CD4-positive, alpha-beta T cell (primary cell): ENCODE measurements at regions of chr9 and their contacts with region 1.

Region 1: DNA sequence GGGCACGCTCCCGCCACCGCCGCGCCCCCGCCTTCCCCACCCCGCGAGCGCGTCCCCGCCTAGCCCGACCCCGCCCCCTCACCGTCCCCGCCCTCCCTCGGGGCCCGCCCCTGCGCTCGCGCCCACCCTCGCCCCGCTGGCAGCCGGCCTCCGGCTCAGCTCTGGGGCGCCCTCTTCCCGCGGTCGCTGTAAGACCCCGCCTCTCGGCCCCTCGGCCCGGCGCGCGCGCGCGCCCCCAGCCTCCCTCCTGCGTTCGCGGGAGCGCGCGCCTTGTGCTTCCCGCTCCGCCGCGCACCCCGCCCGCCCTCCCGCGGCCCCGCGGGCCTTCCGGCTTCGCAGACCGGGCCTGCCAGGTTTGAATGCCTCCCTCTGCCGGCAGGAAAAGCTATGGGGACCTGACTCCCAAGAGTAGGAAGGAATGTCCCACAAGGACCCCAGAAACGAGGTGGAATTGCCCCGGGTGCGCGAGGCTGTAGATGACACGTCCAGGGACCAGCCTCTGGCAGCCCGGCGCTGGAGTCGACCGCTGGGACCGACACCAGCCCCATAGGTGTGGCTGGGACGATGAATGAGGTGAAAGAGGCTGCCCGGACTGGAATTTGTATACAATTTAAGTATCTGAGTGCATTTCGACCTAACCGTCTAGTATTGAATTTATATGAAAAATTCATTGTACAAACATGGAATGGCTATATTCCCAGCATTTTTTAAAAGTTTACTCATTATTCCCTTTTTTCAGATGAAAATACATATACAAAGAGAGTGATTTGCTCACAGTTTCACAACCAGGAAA is 416 bp upstream of the PTBP3 start:
- DNase-seq: peak; percentile 85 to 98 (median 94)
- ATAC-seq: peak; percentile 80
- H3K4me3 ChIP-seq: peak overlapping the region; percentile 88
- H3K4me3 Mint-ChIP-seq: peak overlapping the region; percentile 90
- H3K27ac ChIP-seq: peak overlapping the region; percentile 91 to 92
- H3K27ac Mint-ChIP-seq: peak overlapping the region; percentile 88
- H3K4me1 ChIP-seq: peaks cover 7% of the 10 kb centered on the region
- H3K4me1 Mint-ChIP-seq: peaks cover 35% of the 10 kb centered on the region
- H3K27me3 ChIP-seq: no peaks in the 10 kb centered on the region
- H3K27me3 Mint-ChIP-seq: no peaks in the 10 kb centered on the region
- CTCF ChIP-seq: peak; percentile 49

Region 2: GRCh38 chr9:111483862-111484571 is 849.8 kb before region 1 on chr9 and contains the start of gene ECPAS:
- CTCF ChIA-PET with region 1: no interaction called
- POLR2A ChIA-PET with region 1: no interaction called
- intact Hi-C with region 1: loop called in 1 of 2 experiments (anchors 5 kb)
- DNase-seq: peak; percentile 27 to 83 (median 48)
- ATAC-seq: peak; percentile 60
- H3K4me3 ChIP-seq: peak within 1 kb of the TSS; percentile 95
- H3K4me3 Mint-ChIP-seq: peak within 1 kb of the TSS; percentile 86
- H3K27ac ChIP-seq: peak within 1 kb of the TSS; percentile 62 to 78
- H3K27ac Mint-ChIP-seq: peak within 1 kb of the TSS; percentile 83
- H3K4me1 ChIP-seq: peaks cover 12% of the 10 kb centered on the region
- H3K4me1 Mint-ChIP-seq: peaks cover 26% of the 10 kb centered on the region
- H3K27me3 ChIP-seq: no peaks in the 10 kb centered on the region
- H3K27me3 Mint-ChIP-seq: no peaks in the 10 kb centered on the region
- CTCF ChIP-seq: no peak
- total RNA-seq, gene ECPAS: 36.6 to 37.5 TPM

Region 3: DNA sequence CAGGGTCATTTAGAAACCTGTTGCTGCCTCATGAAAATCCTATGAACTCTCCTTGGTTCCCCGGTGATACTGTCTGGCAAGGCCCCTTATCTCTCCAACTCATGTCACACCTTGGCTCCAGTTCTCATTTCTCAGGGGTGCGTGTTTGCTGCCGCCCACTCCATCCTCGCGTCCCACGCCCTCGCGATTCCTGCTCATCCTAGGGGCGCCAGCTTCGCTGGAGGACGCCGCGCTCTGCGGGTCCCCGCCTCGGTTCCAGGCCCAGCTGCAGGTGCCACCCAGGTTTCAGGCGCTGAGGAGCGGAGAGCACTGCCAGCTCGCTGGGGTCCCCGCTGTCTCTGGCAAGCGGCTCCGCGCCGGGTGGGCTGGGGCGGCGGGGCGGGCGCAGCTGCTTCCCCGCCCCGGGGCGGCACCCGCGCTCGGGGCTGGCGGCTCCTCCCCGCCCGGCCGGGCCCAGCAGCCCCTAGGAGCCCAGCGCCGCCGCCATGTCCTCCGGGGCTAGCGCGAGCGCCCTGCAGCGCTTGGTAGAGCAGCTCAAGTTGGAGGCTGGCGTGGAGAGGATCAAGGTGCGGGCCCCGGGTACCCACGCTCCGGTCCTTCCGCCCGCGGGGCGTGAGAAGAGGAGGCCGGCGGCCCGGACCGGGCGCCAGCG is 672.6 kb before region 1 on chr9 and contains the start of gene GNG10:
- CTCF ChIA-PET with region 1: no interaction called
- POLR2A ChIA-PET with region 1: interaction called, 4 read pairs
- intact Hi-C with region 1: loop called in 1 of 2 experiments (anchors 10 kb)
- DNase-seq: peak; percentile 34 to 84 (median 65)
- ATAC-seq: peak; percentile 91
- H3K4me3 ChIP-seq: peak within 1 kb of the TSS; percentile 76
- H3K4me3 Mint-ChIP-seq: peak within 1 kb of the TSS; percentile 91
- H3K27ac ChIP-seq: peak within 1 kb of the TSS; percentile 61 to 64
- H3K27ac Mint-ChIP-seq: peak within 1 kb of the TSS; percentile 78
- H3K4me1 ChIP-seq: peaks cover 37% of the 10 kb centered on the region
- H3K4me1 Mint-ChIP-seq: peaks cover 44% of the 10 kb centered on the region
- H3K27me3 ChIP-seq: no peaks in the 10 kb centered on the region
- H3K27me3 Mint-ChIP-seq: no peaks in the 10 kb centered on the region
- CTCF ChIP-seq: no peak
- total RNA-seq, gene GNG10: 2.8 to 3.0 TPM

Region 4: GRCh38 chr9:112299514-112299913 is 34.3 kb before region 1 on chr9:
- CTCF ChIA-PET with region 1: interaction called, 3 read pairs
- POLR2A ChIA-PET with region 1: no interaction called
- intact Hi-C with region 1: loop called in 1 of 2 experiments (anchors 5 kb)
- DNase-seq: no peak
- ATAC-seq: no peak
- H3K4me3 ChIP-seq: no peak overlapping the region
- H3K4me3 Mint-ChIP-seq: no peak overlapping the region
- H3K27ac ChIP-seq: no peak overlapping the region
- H3K27ac Mint-ChIP-seq: peak overlapping the region; percentile 39
- H3K4me1 ChIP-seq: peaks cover 4% of the 10 kb centered on the region
- H3K4me1 Mint-ChIP-seq: peaks cover 74% of the 10 kb centered on the region
- H3K27me3 ChIP-seq: no peaks in the 10 kb centered on the region
- H3K27me3 Mint-ChIP-seq: no peaks in the 10 kb centered on the region
- CTCF ChIP-seq: no peak

Region 5: GRCh38 chr9:112379177-112380101 is 45.6 kb after region 1 on chr9:
- CTCF ChIA-PET with region 1: interaction called, 7 read pairs
- POLR2A ChIA-PET with region 1: interaction called, 45 read pairs
- intact Hi-C with region 1: loop called (anchors 2 to 5 kb)
- DNase-seq: peak; percentile 94 to 100 (median 98)
- ATAC-seq: peak; percentile 96
- H3K4me3 ChIP-seq: peak overlapping the region; percentile 98
- H3K4me3 Mint-ChIP-seq: peak overlapping the region; percentile 100
- H3K27ac ChIP-seq: peak overlapping the region; percentile 89 to 94
- H3K27ac Mint-ChIP-seq: peak overlapping the region; percentile 98
- H3K4me1 ChIP-seq: peaks cover 17% of the 10 kb centered on the region
- H3K4me1 Mint-ChIP-seq: peaks cover 64% of the 10 kb centered on the region
- H3K27me3 ChIP-seq: no peaks in the 10 kb centered on the region
- H3K27me3 Mint-ChIP-seq: no peaks in the 10 kb centered on the region
- CTCF ChIP-seq: no peak

Region 6: GRCh38 chr9:112717661-112718341 is 384.0 kb after region 1 on chr9 and contains the start of gene INIP:
- CTCF ChIA-PET with region 1: no interaction called
- POLR2A ChIA-PET with region 1: interaction called, 4 read pairs
- intact Hi-C with region 1: loop called (anchors 1 to 2 kb)
- DNase-seq: peak; percentile 91 to 99 (median 95)
- ATAC-seq: peak; percentile 89
- H3K4me3 ChIP-seq: peak within 1 kb of the TSS; percentile 96
- H3K4me3 Mint-ChIP-seq: peak within 1 kb of the TSS; percentile 99
- H3K27ac ChIP-seq: peak within 1 kb of the TSS; percentile 92 to 95
- H3K27ac Mint-ChIP-seq: peak within 1 kb of the TSS; percentile 99
- H3K4me1 ChIP-seq: peaks cover 15% of the 10 kb centered on the region
- H3K4me1 Mint-ChIP-seq: peaks cover 32% of the 10 kb centered on the region
- H3K27me3 ChIP-seq: no peaks in the 10 kb centered on the region
- H3K27me3 Mint-ChIP-seq: no peaks in the 10 kb centered on the region
- CTCF ChIP-seq: peak; percentile 34
- total RNA-seq, gene INIP: 7.8 to 9.1 TPM